ENCODE measurements at regions of chr10 and their contacts with region 1.

Region 1: GRCh38 chr10:97553575-97554031 is 19.0 kb upstream of the ANKRD2 start:
- DNase-seq: peak; percentile 80
- H3K4me3 ChIP-seq: no peak overlapping the region; a peak in 1 of 4 replicates
- H3K27ac ChIP-seq: no peak overlapping the region
- H3K4me1 ChIP-seq: peaks cover 12 to 23% of the 10 kb centered on the region in 2 experiments; a peak in 3 of 4 replicates
- H3K27me3 ChIP-seq: no peaks in the 10 kb centered on the region
- CTCF ChIP-seq: peak; percentile 91
- EP300 ChIP-seq: no peak
- RAD21 ChIP-seq: peak; percentile 91

Region 2: DNA sequence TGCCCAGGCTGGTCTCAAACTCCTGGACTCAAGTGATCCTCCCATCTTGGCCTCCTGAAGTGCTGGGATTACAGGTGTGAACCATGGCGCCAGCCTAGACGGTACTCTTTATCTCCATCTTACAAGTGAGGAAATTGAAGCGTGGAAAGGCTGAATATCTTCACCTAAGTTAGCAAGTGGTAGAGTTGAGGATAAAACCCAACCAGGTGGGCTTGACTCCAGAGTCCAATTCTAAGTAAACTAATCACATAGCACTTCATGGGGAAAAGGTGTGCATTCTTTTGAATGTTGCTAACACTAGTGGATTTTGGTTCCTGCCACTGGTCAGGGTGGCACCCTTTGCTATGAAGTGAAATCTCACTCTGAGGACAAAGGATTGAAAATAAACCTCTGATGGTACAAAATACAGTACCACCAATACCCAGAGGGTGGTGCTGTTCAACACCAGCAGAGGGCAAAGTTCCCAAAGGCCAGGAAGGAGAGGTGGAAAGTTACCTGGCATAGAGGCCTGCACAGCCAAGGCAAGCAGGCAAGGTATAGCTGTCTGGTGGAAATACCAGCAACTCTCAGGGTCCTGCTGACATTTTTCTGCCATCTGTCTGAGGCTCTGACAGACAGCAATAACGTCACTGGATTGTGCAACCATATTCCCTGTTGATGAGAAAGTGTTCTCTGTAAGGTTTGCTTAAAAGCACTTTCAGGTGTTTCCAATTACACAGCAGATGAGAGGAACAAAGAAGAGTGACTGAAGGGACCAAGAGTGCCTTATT is 90.1 kb before region 1 on chr10:
- CTCF ChIA-PET with region 1: interaction called, 132 read pairs
- POLR2A ChIA-PET with region 1: interaction called, 4 read pairs
- DNase-seq: peak; percentile 70
- H3K4me3 ChIP-seq: no peak overlapping the region
- H3K27ac ChIP-seq: peak overlapping the region; percentile 32 to 59; a peak in 3 of 4 replicates
- H3K4me1 ChIP-seq: peaks cover 0 to 4% of the 10 kb centered on the region in 2 experiments; a peak in 2 of 4 replicates
- H3K27me3 ChIP-seq: no peaks in the 10 kb centered on the region
- CTCF ChIP-seq: peak; percentile 89
- EP300 ChIP-seq: no peak
- RAD21 ChIP-seq: peak; percentile 83

Region 3: GRCh38 chr10:97498841-97499560 is 54.6 kb before region 1 on chr10 and contains the start of gene UBTD1:
- CTCF ChIA-PET with region 1: interaction called, 13 read pairs
- POLR2A ChIA-PET with region 1: interaction called, 5 read pairs
- DNase-seq: peak; percentile 75
- H3K4me3 ChIP-seq: peak within 1 kb of the TSS; percentile 93 to 98
- H3K27ac ChIP-seq: peak within 1 kb of the TSS; percentile 89
- H3K4me1 ChIP-seq: peaks cover 14 to 16% of the 10 kb centered on the region in 2 experiments; a peak in 3 of 4 replicates
- H3K27me3 ChIP-seq: no peaks in the 10 kb centered on the region
- CTCF ChIP-seq: peak; percentile 20; the same call in 1 of the 2 replicates
- EP300 ChIP-seq: no peak
- RAD21 ChIP-seq: no peak
- polyA plus RNA-seq, gene UBTD1: 37.9 and 38.8 TPM in 2 replicates

Region 4: DNA sequence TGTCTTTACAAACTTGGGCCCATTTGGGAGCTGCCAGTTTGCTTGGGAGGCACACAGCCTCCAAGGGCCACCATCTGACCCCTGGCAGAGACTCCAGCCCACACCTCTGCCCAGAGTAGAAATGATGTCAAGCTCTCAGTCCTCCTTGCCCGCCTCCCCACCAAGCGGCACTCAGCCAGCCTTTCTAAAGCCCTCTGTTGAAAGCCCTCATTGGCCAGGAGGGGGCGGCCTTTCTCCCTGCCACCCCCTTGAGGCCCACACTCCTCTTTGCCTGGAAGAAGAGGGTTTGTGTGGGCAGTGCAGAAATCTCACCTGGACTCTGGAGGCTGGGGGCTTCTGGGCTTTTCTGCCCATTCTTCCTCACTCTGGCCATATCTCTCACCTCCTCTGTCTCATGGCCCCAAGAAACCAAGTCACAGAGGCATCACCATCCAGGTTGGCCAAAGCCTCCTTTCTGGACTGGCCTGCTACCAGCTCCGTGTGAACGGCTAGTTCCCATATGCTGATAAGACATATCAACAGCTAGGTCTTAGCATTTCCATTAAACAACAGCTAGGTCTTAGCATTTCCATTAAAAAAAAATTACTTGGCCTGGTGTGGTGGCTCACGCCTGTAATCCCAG is 18.7 kb before region 1 on chr10:
- CTCF ChIA-PET with region 1: interaction called, 61 read pairs
- POLR2A ChIA-PET with region 1: no interaction called
- DNase-seq: peak; percentile 62
- H3K4me3 ChIP-seq: no peak overlapping the region
- H3K27ac ChIP-seq: peak overlapping the region in 1 of 2 experiments; percentile 95; a peak in 1 of 4 replicates
- H3K4me1 ChIP-seq: peaks cover 16 to 38% of the 10 kb centered on the region in 2 experiments; a peak in 3 of 4 replicates
- H3K27me3 ChIP-seq: no peaks in the 10 kb centered on the region
- CTCF ChIP-seq: peak; percentile 59
- EP300 ChIP-seq: no peak
- RAD21 ChIP-seq: peak; percentile 42; the same call in 1 of the 2 replicates

Region 5: DNA sequence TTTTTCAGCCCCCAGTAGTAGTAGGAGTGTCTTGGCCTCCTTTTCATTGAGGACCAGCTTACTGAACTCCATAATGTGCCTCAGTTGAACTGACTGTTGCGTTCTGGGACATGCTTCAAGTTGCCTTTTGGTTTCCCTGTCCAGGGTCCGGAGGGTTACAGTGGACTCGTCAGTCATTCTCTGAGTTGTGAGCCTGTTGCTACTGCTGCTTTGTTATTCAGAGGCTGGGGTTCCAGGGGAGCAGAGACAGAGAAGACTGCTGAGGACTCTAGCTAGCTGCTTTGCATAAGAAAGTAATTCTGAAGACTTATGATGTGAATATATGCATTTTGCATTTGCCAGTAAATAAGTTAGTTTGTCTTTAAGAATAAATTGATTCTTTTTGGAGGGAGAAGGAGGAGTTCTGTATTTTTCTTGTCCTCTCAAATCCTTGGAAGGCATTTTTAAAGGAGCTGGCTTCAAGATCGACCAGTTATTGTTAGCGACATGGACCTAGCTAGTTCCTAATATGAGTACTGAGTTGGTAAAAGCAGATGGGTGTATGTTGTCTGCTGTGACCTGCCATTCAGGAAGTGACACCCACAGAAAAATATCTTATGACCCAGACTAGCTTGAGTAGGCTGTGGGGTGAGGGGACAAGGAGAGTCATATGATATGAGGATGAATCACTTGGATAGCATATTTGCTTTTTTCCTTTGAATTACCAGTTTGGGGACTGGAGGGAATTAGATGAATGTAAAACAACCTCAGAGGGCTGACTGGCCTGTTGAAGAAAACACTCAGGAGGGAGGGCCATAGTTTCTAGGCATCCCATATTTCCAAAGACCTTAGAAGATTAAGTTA is 95.2 kb after region 1 on chr10:
- CTCF ChIA-PET with region 1: no interaction called
- POLR2A ChIA-PET with region 1: no interaction called
- DNase-seq: no peak
- H3K4me3 ChIP-seq: no peak overlapping the region
- H3K27ac ChIP-seq: peak overlapping the region; percentile 81 to 95
- H3K4me1 ChIP-seq: peaks cover 4 to 22% of the 10 kb centered on the region in 2 experiments; a peak in 3 of 4 replicates
- H3K27me3 ChIP-seq: no peaks in the 10 kb centered on the region
- CTCF ChIP-seq: no peak
- EP300 ChIP-seq: peak in 1 of 2 experiments; percentile 68; a peak in 1 of 4 replicates
- RAD21 ChIP-seq: no peak

Region 6: DNA sequence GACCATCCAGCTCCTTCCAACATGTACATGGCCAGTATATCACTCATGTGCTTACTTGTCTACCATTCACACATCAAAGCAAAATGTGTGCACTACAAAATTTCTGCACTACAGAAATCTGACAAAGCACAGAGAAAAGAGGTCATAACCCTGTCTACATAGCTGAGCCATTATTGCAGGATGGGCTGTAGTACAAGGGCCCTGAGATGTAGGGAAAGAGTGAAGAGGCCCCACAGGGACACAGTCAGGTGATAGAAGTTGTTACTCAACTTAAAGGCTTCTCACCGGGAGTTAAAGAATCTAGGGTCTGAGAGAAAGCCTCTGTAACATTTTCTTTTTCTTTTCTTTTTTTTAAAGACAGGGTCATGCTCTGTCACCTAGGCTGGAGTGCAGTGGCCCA is 116.0 kb after region 1 on chr10:
- CTCF ChIA-PET with region 1: no interaction called
- POLR2A ChIA-PET with region 1: no interaction called
- DNase-seq: no peak
- H3K4me3 ChIP-seq: no peak overlapping the region
- H3K27ac ChIP-seq: no peak overlapping the region
- H3K4me1 ChIP-seq: peaks cover 3 to 6% of the 10 kb centered on the region in 2 experiments; a peak in 1 of 4 replicates
- H3K27me3 ChIP-seq: no peaks in the 10 kb centered on the region
- CTCF ChIP-seq: no peak
- EP300 ChIP-seq: no peak
- RAD21 ChIP-seq: no peak

Measured in SK-N-SH (cell line).